ENCODE measurements at regions of chr3 and their contacts with region 1.

Region 1: GRCh38 chr3:27712136-27713077 is 9.7 kb downstream of the EOMES start:
- DNase-seq: peak; percentile 77 to 82 (median 79)
- ATAC-seq: peak; percentile 91
- H3K4me3 ChIP-seq: no peak overlapping the region
- H3K4me1 ChIP-seq: peaks cover 27% of the 10 kb centered on the region
- CTCF ChIP-seq: no peak

Region 2: GRCh38 chr3:28328188-28329151 is 616.1 kb after region 1 on chr3:
- intact Hi-C with region 1: loop called (anchors 5 to 10 kb)
- DNase-seq: no peak
- ATAC-seq: peak; percentile 55
- H3K4me3 ChIP-seq: no peak overlapping the region
- H3K4me1 ChIP-seq: no peaks in the 10 kb centered on the region
- CTCF ChIP-seq: peak; percentile 66

Region 3: GRCh38 chr3:28334552-28334951 is 622.1 kb after region 1 on chr3:
- intact Hi-C with region 1: loop called (anchors 5 to 10 kb)
- DNase-seq: no peak
- ATAC-seq: no peak
- H3K4me3 ChIP-seq: no peak overlapping the region
- H3K4me1 ChIP-seq: no peaks in the 10 kb centered on the region
- CTCF ChIP-seq: no peak